ENCODE measurements at regions of chr10 and their contacts with region 1.

Region 1: DNA sequence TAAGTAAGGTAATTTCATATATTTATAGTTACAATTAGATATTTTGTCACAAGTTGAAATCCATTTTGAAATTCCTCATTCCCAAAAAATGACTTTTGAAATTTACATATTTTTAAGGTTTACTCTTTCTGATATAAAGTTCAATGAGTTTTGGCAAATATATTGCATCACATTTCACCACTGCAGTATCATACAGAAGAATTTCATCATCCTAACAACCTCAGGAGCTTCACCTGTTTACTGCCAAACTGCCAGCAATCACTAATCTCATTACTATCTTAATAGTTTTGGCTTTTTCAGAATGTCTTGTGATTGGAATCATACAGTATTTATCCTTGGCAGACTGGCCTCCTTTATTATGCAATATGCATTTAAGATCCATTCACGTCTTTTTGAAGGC is 1578.9 kb downstream of the REEP3 start:
- DNase-seq: no peak
- H3K4me3 ChIP-seq: no peak overlapping the region
- H3K4me3 Mint-ChIP-seq: no peak overlapping the region
- H3K27ac ChIP-seq: no peak overlapping the region
- H3K27ac Mint-ChIP-seq: no peak overlapping the region
- H3K4me1 ChIP-seq: no peaks in the 10 kb centered on the region
- H3K4me1 Mint-ChIP-seq: no peaks in the 10 kb centered on the region
- H3K27me3 ChIP-seq: no peaks in the 10 kb centered on the region
- H3K27me3 Mint-ChIP-seq: no peaks in the 10 kb centered on the region

Region 2: GRCh38 chr10:65017523-65017922 is 82.6 kb before region 1 on chr10:
- CTCF ChIA-PET with region 1: no interaction called
- POLR2A ChIA-PET with region 1: no interaction called
- intact Hi-C with region 1: no loop called
- DNase-seq: no peak
- H3K4me3 ChIP-seq: no peak overlapping the region
- H3K4me3 Mint-ChIP-seq: no peak overlapping the region
- H3K27ac ChIP-seq: no peak overlapping the region
- H3K27ac Mint-ChIP-seq: no peak overlapping the region
- H3K4me1 ChIP-seq: no peaks in the 10 kb centered on the region
- H3K4me1 Mint-ChIP-seq: no peaks in the 10 kb centered on the region
- H3K27me3 ChIP-seq: no peaks in the 10 kb centered on the region
- H3K27me3 Mint-ChIP-seq: no peaks in the 10 kb centered on the region

Region 3: DNA sequence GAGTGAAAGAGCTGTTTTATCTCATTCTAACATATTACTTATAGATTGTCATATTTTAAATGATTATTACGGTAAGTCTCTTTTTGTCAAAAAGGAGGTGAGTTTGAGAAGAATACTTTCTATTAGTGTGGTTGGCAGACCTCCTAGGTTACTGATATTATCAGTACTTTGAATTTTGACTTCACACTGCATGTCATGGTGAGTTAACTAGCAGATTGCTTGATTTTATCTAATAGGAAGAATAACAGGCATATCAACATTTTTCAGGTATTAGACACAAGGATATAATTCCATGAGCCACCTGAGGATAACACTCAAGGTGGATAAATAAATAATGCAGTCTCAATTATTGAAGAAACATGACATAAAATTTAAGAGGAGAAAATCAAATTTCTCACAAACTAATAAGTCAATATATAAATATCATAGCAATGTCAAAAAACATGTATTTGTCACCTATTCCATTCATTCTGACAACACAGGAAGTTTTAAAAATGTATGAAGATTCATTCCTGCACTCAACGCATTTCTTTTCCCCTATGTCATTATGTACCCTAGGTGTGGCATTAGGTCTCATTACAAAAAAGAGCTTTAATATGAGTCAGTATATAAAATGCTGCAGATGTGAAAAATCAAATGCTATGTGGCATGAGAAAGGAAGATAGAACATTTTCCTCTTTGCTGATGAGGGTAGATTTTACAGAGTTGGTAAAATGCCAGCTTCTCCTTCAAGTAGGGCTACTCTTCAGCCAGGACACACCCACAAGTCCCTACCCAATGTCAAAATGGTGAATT is 42.7 kb after region 1 on chr10:
- CTCF ChIA-PET with region 1: no interaction called
- POLR2A ChIA-PET with region 1: no interaction called
- intact Hi-C with region 1: loop called (anchors 1 kb)
- DNase-seq: no peak
- H3K4me3 ChIP-seq: no peak overlapping the region
- H3K4me3 Mint-ChIP-seq: no peak overlapping the region
- H3K27ac ChIP-seq: no peak overlapping the region
- H3K27ac Mint-ChIP-seq: no peak overlapping the region
- H3K4me1 ChIP-seq: no peaks in the 10 kb centered on the region
- H3K4me1 Mint-ChIP-seq: no peaks in the 10 kb centered on the region
- H3K27me3 ChIP-seq: no peaks in the 10 kb centered on the region
- H3K27me3 Mint-ChIP-seq: no peaks in the 10 kb centered on the region

Measured in CD4-positive, alpha-beta memory T cell (primary cell).